ENCODE measurements at regions of chr17 and their contacts with region 1.

Region 1: GRCh38 chr17:31533546-31534155 is 142.2 kb downstream of the RAB11FIP4 start:
- DNase-seq: no peak
- ATAC-seq: no peak
- H3K4me3 Mint-ChIP-seq: no peak overlapping the region
- H3K27ac Mint-ChIP-seq: peak overlapping the region; percentile 43
- H3K4me1 Mint-ChIP-seq: peaks cover 54% of the 10 kb centered on the region
- H3K27me3 Mint-ChIP-seq: no peaks in the 10 kb centered on the region
- CTCF ChIP-seq: no peak

Region 2: DNA sequence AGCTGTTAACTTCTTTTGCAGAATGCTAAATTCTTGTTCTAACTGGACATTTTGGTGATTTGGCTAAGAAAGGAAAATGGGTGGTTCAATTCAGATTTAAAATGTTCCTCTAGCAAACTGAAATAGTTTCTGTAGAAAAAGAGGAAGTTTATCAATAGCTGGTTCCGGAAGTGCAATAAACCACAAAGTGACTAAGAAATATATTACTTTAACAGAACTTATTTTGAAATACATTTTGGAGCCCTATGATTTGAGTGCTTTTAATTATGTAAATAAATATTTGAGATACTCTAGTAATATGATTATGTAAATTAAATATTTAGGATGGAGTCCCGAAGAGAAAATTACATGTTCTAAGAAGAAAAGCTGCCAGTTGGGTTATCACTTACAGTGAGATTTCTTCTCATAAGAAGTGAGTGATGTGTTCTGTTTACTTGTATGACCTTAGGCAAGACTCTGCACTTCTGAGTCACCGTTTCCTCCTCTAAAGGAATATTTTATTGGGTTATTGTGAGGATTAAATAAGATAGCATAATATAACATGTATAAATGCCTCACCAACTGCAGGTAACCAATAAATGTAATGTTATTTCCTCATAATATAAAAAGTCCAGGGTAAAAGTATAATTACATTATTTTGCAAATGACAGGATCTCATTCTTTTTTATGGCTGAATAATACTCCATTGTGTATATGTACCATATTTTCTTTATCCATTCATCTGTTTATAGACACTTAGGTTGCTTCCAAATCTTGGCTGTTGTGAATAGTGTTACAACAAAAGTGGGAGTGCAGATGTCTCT is 219.5 kb before region 1 on chr17 and contains the start of gene EVI2B:
- CTCF ChIA-PET with region 1: no interaction called
- POLR2A ChIA-PET with region 1: interaction called, 7 read pairs
- intact Hi-C with region 1: loop called (anchors 5 kb)
- DNase-seq: no peak
- ATAC-seq: peak; percentile 25
- H3K4me3 Mint-ChIP-seq: peak within 1 kb of the TSS; percentile 93
- H3K27ac Mint-ChIP-seq: peak within 1 kb of the TSS; percentile 94
- H3K4me1 Mint-ChIP-seq: peaks cover 63% of the 10 kb centered on the region
- H3K27me3 Mint-ChIP-seq: no peaks in the 10 kb centered on the region
- CTCF ChIP-seq: no peak
- total RNA-seq, gene EVI2B: 104 and 111 TPM in 2 replicates

Region 3: GRCh38 chr17:31487648-31488263 is 45.9 kb before region 1 on chr17:
- CTCF ChIA-PET with region 1: interaction called, 7 read pairs
- POLR2A ChIA-PET with region 1: interaction called, 18 read pairs
- intact Hi-C with region 1: no loop called
- DNase-seq: peak; percentile 89
- ATAC-seq: peak; percentile 85
- H3K4me3 Mint-ChIP-seq: peak overlapping the region; percentile 89
- H3K27ac Mint-ChIP-seq: peak overlapping the region; percentile 87
- H3K4me1 Mint-ChIP-seq: peaks cover 53% of the 10 kb centered on the region
- H3K27me3 Mint-ChIP-seq: no peaks in the 10 kb centered on the region
- CTCF ChIP-seq: no peak

Region 4: GRCh38 chr17:31508288-31509094 is 25.2 kb before region 1 on chr17:
- CTCF ChIA-PET with region 1: interaction called, 3 read pairs
- POLR2A ChIA-PET with region 1: interaction called, 20 read pairs
- intact Hi-C with region 1: no loop called
- DNase-seq: no peak
- ATAC-seq: peak; percentile 77
- H3K4me3 Mint-ChIP-seq: peak overlapping the region; percentile 88
- H3K27ac Mint-ChIP-seq: peak overlapping the region; percentile 96
- H3K4me1 Mint-ChIP-seq: peaks cover 65% of the 10 kb centered on the region
- H3K27me3 Mint-ChIP-seq: no peaks in the 10 kb centered on the region
- CTCF ChIP-seq: no peak

Region 5: DNA sequence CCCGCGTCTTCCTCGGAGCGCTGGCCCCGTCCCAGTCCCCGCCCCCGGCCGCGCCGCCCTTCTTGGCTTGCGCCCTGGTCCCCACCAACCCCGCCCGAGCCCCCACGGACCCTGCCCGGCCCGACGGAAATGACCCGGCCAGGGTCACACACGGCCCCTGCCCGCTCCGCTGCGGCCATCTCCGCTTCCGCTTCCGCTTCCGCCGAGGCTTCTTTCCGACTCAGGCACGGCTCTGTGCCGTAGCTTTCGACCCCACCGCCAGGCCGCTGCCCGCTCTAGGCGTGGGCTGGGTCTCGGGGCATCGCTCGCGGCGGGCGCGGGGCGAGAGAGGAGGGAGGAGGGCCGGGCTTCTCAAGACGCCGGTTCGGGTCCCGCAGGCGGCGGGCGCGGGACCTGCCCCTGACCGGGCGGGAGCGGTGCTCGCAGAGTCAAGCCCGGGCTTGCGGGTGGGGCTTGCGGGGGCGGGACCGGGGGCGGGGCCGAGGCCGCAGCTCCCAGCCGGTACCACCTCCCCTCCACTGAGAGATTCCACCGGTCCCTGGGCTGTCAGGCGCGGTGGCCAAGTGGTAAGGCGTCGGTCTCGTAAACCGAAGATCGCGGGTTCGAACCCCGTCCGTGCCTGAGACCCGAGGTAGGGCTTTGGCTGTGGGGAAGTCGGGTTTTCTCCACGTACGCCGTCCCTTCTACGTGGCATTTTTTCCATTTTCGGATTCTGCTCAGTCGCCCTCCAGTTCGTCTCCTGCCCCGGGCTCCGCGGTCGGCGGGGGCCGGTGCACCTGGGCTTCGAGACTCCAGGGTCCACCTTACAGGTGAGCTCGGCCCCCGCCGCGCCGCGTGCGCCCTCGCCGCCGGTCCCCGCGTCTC is 16.1 kb after region 1 on chr17:
- CTCF ChIA-PET with region 1: interaction called, 4 read pairs
- POLR2A ChIA-PET with region 1: interaction called, 192 read pairs
- intact Hi-C with region 1: loop called (anchors 1 kb)
- DNase-seq: peak; percentile 90
- ATAC-seq: peak; percentile 82
- H3K4me3 Mint-ChIP-seq: peak overlapping the region; percentile 88
- H3K27ac Mint-ChIP-seq: peak overlapping the region; percentile 90
- H3K4me1 Mint-ChIP-seq: peaks cover 25% of the 10 kb centered on the region
- H3K27me3 Mint-ChIP-seq: no peaks in the 10 kb centered on the region
- CTCF ChIP-seq: no peak

Region 6: DNA sequence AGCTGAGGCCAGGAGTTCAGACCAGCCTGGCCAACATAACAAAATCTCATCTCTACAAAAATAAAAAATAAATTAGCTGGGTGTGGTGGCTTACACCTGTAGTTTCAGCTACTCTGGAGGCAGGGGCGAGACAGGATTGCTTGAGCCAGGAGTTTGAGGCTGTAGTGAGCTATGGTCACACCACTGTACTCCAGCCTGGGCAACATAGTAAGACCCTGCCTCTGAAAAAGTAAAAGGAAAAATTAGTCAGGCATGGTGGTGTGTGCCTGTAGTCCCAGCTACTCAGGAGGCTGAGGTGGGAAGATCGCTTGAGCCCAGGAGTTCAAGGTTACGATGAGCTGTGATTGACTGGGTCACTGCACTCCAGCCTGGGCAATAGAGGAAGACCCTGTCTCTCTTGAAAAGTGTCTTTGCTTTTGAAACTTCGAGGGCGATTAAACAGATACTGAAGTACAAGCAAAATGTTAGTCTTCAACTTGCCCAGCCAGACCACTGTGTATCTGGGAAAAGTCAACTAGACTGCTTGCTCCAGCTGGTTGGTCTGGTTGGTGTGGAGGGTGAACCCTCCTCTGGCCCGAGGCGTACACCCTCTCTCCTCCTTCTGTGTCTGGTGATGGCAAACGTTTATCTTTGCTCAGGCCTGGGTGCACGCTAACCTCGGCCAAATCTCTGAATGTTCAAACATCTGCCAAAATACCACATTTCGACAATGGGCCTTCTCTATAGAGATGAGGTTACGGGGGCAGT is 32.8 kb after region 1 on chr17:
- CTCF ChIA-PET with region 1: no interaction called
- POLR2A ChIA-PET with region 1: no interaction called
- intact Hi-C with region 1: no loop called
- DNase-seq: no peak
- ATAC-seq: no peak
- H3K4me3 Mint-ChIP-seq: no peak overlapping the region
- H3K27ac Mint-ChIP-seq: no peak overlapping the region
- H3K4me1 Mint-ChIP-seq: peaks cover 22% of the 10 kb centered on the region
- H3K27me3 Mint-ChIP-seq: peaks cover 1% of the 10 kb centered on the region
- CTCF ChIP-seq: no peak

Region 7: DNA sequence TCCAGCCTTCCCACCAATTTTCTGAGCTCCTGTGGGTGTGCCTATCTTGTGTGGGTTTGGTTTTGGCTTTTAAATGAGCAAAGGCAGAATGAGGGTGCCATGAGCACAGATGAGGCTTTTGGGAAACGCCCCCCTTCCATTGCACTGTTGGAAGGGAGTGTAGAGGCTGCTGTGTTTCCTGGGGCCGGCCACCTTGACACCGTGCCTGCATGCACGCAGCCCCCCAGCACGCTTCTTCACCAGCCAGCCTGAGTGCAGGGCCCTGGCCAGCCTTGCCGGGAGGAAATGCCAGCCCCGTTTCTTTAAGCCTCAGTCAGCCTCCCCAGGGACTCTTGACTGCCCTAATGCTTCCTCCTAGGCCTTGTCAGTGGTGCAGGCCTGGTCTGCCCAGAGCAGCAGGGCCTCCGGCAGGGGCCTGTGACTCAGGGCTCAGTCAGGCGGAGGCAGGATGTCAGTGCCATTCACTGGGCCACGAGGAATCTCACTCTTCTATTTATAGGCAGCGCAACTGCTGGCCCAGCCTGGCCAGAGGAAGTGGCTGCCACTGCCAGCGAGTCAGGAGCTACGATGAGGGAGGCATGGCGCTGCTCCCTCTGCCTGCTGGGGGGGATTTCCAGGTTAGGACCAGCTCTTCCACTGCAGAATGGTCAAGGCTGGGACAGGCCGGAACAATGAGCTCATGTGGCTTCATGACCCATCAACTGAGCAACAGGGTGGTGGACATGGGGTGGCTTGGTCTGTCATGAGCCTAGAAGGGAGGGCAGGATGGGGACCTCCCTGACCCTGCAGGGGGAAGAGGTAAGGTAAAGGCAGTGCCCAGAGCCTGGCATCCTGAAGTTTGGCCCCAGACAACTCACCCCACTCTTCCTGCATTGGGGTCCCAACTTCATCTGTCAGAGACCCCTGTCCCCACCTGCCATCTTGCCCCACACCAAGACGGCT is 63.0 kb after region 1 on chr17:
- CTCF ChIA-PET with region 1: interaction called, 4 read pairs
- POLR2A ChIA-PET with region 1: interaction called, 3 read pairs
- intact Hi-C with region 1: loop called (anchors 2 kb)
- DNase-seq: peak; percentile 66
- ATAC-seq: peak; percentile 100
- H3K4me3 Mint-ChIP-seq: peak overlapping the region; percentile 39
- H3K27ac Mint-ChIP-seq: peak overlapping the region; percentile 86
- H3K4me1 Mint-ChIP-seq: peaks cover 38% of the 10 kb centered on the region
- H3K27me3 Mint-ChIP-seq: no peaks in the 10 kb centered on the region
- CTCF ChIP-seq: no peak

Region 8: DNA sequence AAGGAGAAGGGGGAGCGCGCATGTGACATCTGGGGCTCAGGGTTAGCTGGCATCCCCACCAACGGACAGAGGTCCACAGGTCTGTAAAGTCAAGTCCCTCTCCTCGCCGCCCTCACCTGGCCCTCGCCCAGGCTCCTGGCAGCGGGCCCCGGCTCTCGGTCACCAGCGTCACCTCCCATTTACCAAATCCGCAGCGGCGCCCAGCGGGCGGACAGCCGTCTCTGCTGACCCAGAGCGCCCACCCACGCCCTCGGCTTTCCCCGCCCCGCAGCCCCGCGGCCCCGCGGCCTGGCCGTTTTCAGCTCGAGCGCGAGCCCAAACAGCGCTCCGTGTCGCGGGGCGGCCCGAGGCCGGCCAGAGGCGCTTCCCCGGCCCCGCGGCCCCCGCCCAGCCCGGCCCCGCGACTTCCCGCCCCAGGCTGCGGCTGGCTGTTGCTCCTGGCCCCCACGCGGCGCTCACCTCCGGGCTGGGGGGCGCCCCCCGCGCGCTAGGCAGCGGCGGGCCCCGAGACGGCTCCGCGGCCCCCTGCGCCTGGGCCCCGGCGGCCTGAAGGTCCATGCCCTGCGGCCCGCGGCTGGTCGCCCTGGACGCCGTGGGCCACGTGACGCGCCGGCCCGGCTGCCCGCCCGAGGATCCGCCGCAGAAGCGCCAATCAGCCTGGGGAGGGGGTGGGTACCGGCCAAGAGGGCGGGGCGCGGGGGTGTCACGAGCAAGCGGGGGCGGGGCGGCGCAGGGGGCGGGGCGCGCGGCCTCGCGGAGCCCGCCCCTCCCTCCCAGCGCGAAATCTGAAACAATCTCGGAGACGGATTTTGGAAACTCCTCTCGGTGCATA is 325.2 kb after region 1 on chr17 and contains the start of gene COPRS:
- CTCF ChIA-PET with region 1: interaction called, 3 read pairs
- POLR2A ChIA-PET with region 1: interaction called, 11 read pairs
- intact Hi-C with region 1: no loop called
- DNase-seq: peak; percentile 75
- ATAC-seq: peak; percentile 91
- H3K4me3 Mint-ChIP-seq: peak within 1 kb of the TSS; percentile 91
- H3K27ac Mint-ChIP-seq: peak within 1 kb of the TSS; percentile 74
- H3K4me1 Mint-ChIP-seq: peaks cover 21% of the 10 kb centered on the region
- H3K27me3 Mint-ChIP-seq: no peaks in the 10 kb centered on the region
- CTCF ChIP-seq: no peak
- total RNA-seq, gene COPRS: 27.0 and 28.8 TPM in 2 replicates